ENCODE measurements at regions of chr12 and their contacts with region 1.

Region 1: GRCh38 chr12:53220801-53221202 is 11.2 kb downstream of the RARG start:
- DNase-seq: peak; percentile 97
- ATAC-seq: peak; percentile 92

Region 2: GRCh38 chr12:53267999-53268647 is 47.3 kb after region 1 on chr12 and contains the start of gene ESPL1:
- intact Hi-C with region 1: loop called (anchors 5 kb)
- DNase-seq: peak; percentile 86
- ATAC-seq: peak; percentile 94
- total RNA-seq, gene ESPL1: 0.97 TPM